Heart left ventricle (tissue), 16 donors: ENCODE measurements at regions of chr2 and their contacts with region 1.

Region 1: GRCh38 chr2:182642328-182642727 is 73.7 kb upstream of the DNAJC10 start:
- DNase-seq: peak in 4 of 5 donors; percentile 26 to 71 (median 46)
- ATAC-seq: peak in 3 of 4 donors; percentile 64 to 83 (median 79)
- H3K4me3 ChIP-seq: no peak overlapping the region
- H3K27ac ChIP-seq: no peak overlapping the region
- H3K4me1 ChIP-seq: no peaks in the 10 kb centered on the region
- H3K27me3 ChIP-seq: no peaks in the 10 kb centered on the region
- CTCF ChIP-seq: no peak
- POLR2A ChIP-seq: no peak

Region 2: GRCh38 chr2:182291296-182291695 is 351.0 kb before region 1 on chr2:
- intact Hi-C with region 1: loop called in 1 of 10 experiments (anchors 10 kb)
- DNase-seq: no peak
- ATAC-seq: no peak
- H3K4me3 ChIP-seq: no peak overlapping the region
- H3K27ac ChIP-seq: no peak overlapping the region
- H3K4me1 ChIP-seq: peaks cover 0 to 7% (median 0%) of the 10 kb centered on the region in 12 donors
- H3K27me3 ChIP-seq: no peaks in the 10 kb centered on the region
- CTCF ChIP-seq: no peak
- POLR2A ChIP-seq: no peak

Region 3: DNA sequence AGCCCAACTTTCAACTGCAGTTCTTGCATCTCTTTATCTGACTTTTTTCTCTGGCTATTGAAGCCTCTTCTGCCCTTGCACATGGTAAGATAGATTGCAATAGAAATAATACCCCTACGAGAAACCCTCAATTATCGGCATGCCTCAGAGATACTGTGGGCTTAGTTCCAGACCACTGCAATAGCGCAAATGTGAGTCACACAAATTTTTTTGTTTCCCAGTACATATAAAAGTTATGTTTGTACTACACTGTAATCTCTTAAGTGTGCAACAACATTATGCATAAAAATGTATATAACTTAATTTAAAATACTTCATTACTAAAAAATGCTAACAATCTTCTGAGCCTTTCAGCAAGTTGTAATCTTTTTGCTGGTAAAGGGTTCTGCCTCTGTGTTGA is 340.2 kb before region 1 on chr2:
- intact Hi-C with region 1: loop called in 3 of 10 experiments (anchors 10 kb)
- DNase-seq: no peak
- ATAC-seq: no peak
- H3K4me3 ChIP-seq: no peak overlapping the region
- H3K27ac ChIP-seq: no peak overlapping the region
- H3K4me1 ChIP-seq: peaks cover 0 to 13% (median 0%) of the 10 kb centered on the region in 12 donors
- H3K27me3 ChIP-seq: no peaks in the 10 kb centered on the region
- CTCF ChIP-seq: no peak
- POLR2A ChIP-seq: no peak

Region 4: GRCh38 chr2:182463760-182464159 is 178.6 kb before region 1 on chr2:
- intact Hi-C with region 1: loop called in 1 of 10 experiments (anchors 10 kb)
- DNase-seq: peak in 4 of 5 donors; percentile 29 to 41 (median 38)
- ATAC-seq: peak; percentile 95 to 99 (median 96)
- H3K4me3 ChIP-seq: no peak overlapping the region
- H3K27ac ChIP-seq: peak overlapping the region in 4 of 12 donors; percentile 17 to 53 (median 44)
- H3K4me1 ChIP-seq: peaks cover 0 to 10% (median 0%) of the 10 kb centered on the region in 12 donors
- H3K27me3 ChIP-seq: no peaks in the 10 kb centered on the region
- CTCF ChIP-seq: no peak
- POLR2A ChIP-seq: no peak

Region 5: GRCh38 chr2:182565906-182566567 is 76.3 kb before region 1 on chr2:
- intact Hi-C with region 1: no loop called
- DNase-seq: no peak
- ATAC-seq: no peak
- H3K4me3 ChIP-seq: no peak overlapping the region
- H3K27ac ChIP-seq: no peak overlapping the region
- H3K4me1 ChIP-seq: no peaks in the 10 kb centered on the region
- H3K27me3 ChIP-seq: no peaks in the 10 kb centered on the region
- CTCF ChIP-seq: no peak
- POLR2A ChIP-seq: no peak

Region 6: GRCh38 chr2:182763311-182763912 is 121.1 kb after region 1 on chr2:
- intact Hi-C with region 1: no loop called
- DNase-seq: no peak
- ATAC-seq: peak in 3 of 4 donors; percentile 46 to 53 (median 53)
- H3K4me3 ChIP-seq: no peak overlapping the region
- H3K27ac ChIP-seq: peak overlapping the region in 1 of 12 donors; percentile 16
- H3K4me1 ChIP-seq: peaks cover 0 to 25% (median 7%) of the 10 kb centered on the region in 12 donors
- H3K27me3 ChIP-seq: no peaks in the 10 kb centered on the region
- CTCF ChIP-seq: peak; percentile 29 to 65 (median 54)
- POLR2A ChIP-seq: no peak